Left ventricle myocardium superior (tissue), 1 donor: ENCODE measurements at regions of chr6 and their contacts with region 1.

Region 1: DNA sequence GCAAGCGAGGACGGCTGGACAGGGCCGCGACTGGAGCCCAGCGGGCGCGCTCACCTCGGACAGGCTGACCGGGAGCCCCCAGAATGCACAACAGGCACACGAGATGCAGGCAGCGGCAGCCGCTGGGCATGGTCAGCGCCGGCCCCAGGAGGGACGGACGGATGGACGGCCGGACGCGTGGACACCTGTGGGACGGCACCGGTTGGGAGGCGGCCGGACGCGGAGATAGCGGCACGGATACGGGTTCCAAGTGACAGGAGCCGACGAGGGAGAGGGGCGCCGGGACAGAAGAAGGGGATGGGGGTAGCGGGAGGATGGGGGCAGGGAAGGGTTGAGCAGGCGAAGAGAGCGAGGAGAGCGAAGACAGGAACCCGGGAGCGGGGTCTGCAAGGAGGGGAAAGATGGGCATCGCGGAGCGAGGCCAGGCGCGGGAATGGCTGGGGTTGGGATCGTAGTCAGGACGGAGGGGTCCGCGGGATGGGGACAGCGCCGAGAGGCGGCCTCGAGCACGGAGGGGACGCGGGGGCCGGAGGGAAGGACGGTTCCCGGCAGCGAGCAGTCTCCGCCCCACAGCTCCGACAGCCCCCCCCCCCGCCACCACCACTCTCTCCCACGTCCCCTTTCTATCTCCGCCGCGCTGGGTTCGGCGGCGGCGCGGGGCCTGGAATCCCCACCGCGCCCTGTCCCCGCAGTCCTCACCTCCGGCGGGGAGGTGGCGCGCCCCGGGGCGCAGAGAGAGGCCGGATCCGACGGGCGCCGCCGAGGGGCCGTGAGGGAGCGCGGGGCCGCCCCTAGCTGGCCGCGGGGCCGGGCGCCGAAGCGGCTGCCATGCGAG is 435 bp downstream of the DLK2 start:
- DNase-seq: peak; percentile 94
- ATAC-seq: peak; percentile 91

Region 2: GRCh38 chr6:43159599-43159998 is 295.3 kb before region 1 on chr6:
- intact Hi-C with region 1: no loop called
- DNase-seq: no peak
- ATAC-seq: no peak

Region 3: GRCh38 chr6:43489277-43490072 is 34.6 kb after region 1 on chr6:
- intact Hi-C with region 1: no loop called
- DNase-seq: no peak
- ATAC-seq: no peak

Region 4: GRCh38 chr6:43506667-43507471 is 52.0 kb after region 1 on chr6:
- intact Hi-C with region 1: loop called (anchors 2 kb)
- DNase-seq: peak; percentile 75
- ATAC-seq: peak; percentile 46

Region 5: GRCh38 chr6:43865932-43866645 is 411.2 kb after region 1 on chr6:
- intact Hi-C with region 1: no loop called
- DNase-seq: no peak
- ATAC-seq: no peak